Transverse colon (tissue), 4 donors: ENCODE measurements at regions of chr2 and their contacts with region 1.

Region 1: DNA sequence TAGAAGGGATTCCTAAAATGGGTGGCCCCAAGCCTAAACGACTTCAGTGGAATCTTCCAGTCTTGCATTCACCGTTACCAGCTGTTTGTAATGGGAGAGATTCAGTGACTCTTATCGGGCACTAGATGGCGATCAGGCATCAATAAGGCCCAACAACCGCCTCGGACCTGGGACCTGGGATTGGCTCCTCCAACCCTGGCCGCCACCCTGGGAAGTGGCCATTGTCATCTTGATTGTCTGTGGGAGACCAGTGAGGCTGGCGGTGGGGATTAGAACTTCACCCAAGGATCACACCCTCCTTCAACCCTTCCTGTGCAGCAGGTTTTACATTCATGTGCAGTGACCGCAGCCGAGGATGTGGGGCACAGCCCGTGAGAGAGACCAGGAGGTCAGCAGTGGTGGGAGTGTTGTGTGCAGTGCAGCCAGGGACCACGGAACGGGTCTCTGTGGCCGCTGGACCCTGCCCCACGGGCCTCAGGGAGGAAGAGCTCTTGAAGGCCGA is 85.3 kb downstream of the SPP2 start:
- DNase-seq: peak; percentile 62
- H3K4me3 ChIP-seq: no peak overlapping the region
- H3K27ac ChIP-seq: no peak overlapping the region
- H3K4me1 ChIP-seq: no peaks in the 10 kb centered on the region
- H3K27me3 ChIP-seq: peaks cover 5% of the 10 kb centered on the region
- CTCF ChIP-seq: peak; percentile 65 to 83 (median 76)
- EP300 ChIP-seq: no peak
- POLR2A ChIP-seq: no peak

Region 2: GRCh38 chr2:234257856-234258561 is 122.2 kb after region 1 on chr2:
- in situ Hi-C with region 1: loop called in 1 of 4 experiments (anchors 25 kb)
- intact Hi-C with region 1: no loop called
- DNase-seq: peak; percentile 66
- H3K4me3 ChIP-seq: no peak overlapping the region
- H3K27ac ChIP-seq: no peak overlapping the region
- H3K4me1 ChIP-seq: peaks cover 0 to 9% (median 0%) of the 10 kb centered on the region in 4 donors
- H3K27me3 ChIP-seq: no peaks in the 10 kb centered on the region
- CTCF ChIP-seq: peak; percentile 22 to 56 (median 43)
- EP300 ChIP-seq: no peak
- POLR2A ChIP-seq: no peak